ENCODE measurements at regions of chr17 and their contacts with region 1.

Region 1: DNA sequence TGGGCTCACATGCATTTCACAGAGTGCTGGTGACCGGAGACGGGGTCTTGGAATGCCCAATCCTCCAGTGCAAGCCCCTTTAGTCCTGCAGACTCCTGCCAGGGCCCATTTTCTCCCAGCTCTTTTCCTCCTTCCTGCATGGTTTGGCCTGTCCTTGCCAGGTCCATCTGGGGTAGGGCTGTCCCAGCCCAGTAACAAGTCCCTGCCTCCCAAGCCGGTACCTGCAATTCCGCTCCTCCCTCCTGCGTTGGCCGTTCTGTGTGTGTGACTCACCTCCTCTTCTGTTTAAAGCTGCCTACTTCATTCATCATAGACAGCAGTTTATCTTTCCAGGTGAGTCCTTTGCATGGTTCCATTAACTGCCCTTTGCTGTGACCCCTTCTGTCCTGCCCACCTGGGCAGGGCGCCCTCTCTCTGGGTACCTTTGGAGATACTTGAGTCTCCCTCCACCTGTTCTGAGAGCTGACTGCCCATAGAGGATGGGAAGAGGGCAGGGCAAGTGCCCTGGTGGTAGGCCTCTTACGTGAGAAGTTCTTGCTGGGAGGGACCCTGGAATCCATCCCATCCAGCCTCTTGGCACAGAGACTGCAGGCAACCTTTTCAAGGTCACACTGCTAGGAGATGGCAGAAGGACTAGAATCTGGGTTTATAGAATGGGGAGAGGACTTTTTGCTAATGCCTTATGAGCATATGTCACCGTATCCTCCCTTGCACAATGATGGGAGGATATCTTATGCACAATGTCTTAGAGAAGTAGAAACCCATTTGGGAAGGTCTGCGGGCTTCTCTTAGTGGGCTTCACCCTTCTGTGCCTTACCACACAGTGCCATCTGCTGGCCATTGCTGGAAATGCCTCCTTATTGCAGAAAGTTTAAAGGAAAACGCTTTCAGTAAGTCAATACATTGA is 29.7 kb upstream of the LGALS9 start:
- DNase-seq: peak; percentile 77 to 81
- ATAC-seq: peak; percentile 39 to 61; a peak in 4 of 6 replicates
- H3K4me3 ChIP-seq: no peak overlapping the region
- H3K27ac ChIP-seq: peak overlapping the region in 1 of 2 experiments; percentile 8; a peak in 1 of 6 replicates
- H3K4me1 ChIP-seq: peaks cover 25% of the 10 kb centered on the region
- CTCF ChIP-seq: peak; percentile 98
- EP300 ChIP-seq: no peak
- POLR2A ChIP-seq: no peak
- RAD21 ChIP-seq: peak; percentile 95 to 99

Region 2: GRCh38 chr17:27199948-27200347 is 401.4 kb before region 1 on chr17:
- CTCF ChIA-PET with region 1: interaction called, 38 read pairs
- POLR2A ChIA-PET with region 1: no interaction called
- DNase-seq: no peak
- ATAC-seq: no peak
- H3K4me3 ChIP-seq: no peak overlapping the region
- H3K27ac ChIP-seq: no peak overlapping the region
- H3K4me1 ChIP-seq: no peaks in the 10 kb centered on the region
- CTCF ChIP-seq: no peak
- EP300 ChIP-seq: no peak
- POLR2A ChIP-seq: no peak
- RAD21 ChIP-seq: no peak

Region 3: DNA sequence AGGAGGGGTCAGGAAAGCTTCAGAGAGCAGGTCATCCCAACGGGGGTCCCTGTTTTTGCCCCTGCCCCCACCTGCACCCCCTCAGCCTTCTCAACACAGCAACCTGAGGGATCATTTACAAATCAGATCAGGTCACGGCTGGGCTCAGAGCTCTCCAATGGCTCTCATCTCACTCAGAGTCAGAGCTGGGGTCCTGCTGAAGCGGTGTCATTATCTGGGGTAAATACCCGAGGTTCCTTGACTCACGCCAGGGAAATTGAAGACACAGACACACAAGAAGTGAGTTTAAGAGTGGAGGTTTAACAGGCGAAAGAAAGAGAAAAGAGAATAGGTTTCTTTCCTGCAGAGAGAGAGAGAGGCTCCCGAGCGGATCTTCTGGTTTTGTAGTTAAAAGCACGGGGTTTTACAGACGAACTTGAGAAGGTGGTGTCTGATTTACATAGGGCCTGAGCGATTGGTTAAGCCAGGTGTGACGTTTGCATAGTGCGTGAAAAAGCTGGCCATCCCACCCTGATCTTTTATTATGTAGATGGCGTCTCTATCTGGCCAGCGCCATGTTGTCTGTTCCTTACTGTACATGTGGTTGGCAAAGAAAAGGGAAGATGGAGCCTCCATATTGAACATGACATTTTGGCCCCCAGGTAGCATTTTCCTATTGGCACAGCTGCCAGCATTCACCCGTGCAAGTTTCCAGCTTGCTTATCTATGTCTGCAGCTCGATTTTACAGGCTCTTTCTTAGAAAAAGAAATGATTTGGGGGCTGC is 256.0 kb before region 1 on chr17:
- CTCF ChIA-PET with region 1: interaction called, 358 read pairs
- POLR2A ChIA-PET with region 1: no interaction called
- DNase-seq: no peak
- ATAC-seq: no peak
- H3K4me3 ChIP-seq: no peak overlapping the region
- H3K27ac ChIP-seq: no peak overlapping the region
- H3K4me1 ChIP-seq: peaks cover 20% of the 10 kb centered on the region
- CTCF ChIP-seq: no peak
- EP300 ChIP-seq: no peak
- POLR2A ChIP-seq: no peak
- RAD21 ChIP-seq: no peak

Region 4: GRCh38 chr17:27420226-27420950 is 180.9 kb before region 1 on chr17:
- CTCF ChIA-PET with region 1: interaction called, 18 read pairs
- POLR2A ChIA-PET with region 1: no interaction called
- DNase-seq: no peak
- ATAC-seq: no peak
- H3K4me3 ChIP-seq: no peak overlapping the region
- H3K27ac ChIP-seq: no peak overlapping the region
- H3K4me1 ChIP-seq: no peaks in the 10 kb centered on the region; the same call in 2 of the 3 replicates
- CTCF ChIP-seq: no peak
- EP300 ChIP-seq: no peak
- POLR2A ChIP-seq: no peak
- RAD21 ChIP-seq: no peak

Region 5: GRCh38 chr17:27473748-27474609 is 127.3 kb before region 1 on chr17:
- CTCF ChIA-PET with region 1: interaction called, 575 read pairs
- POLR2A ChIA-PET with region 1: no interaction called
- DNase-seq: no peak
- ATAC-seq: no peak
- H3K4me3 ChIP-seq: no peak overlapping the region
- H3K27ac ChIP-seq: peak overlapping the region in 1 of 2 experiments; percentile 66; a peak in 4 of 6 replicates
- H3K4me1 ChIP-seq: peaks cover 38% of the 10 kb centered on the region
- CTCF ChIP-seq: no peak
- EP300 ChIP-seq: no peak
- POLR2A ChIP-seq: no peak
- RAD21 ChIP-seq: no peak

Region 6: GRCh38 chr17:27544350-27545131 is 56.8 kb before region 1 on chr17:
- CTCF ChIA-PET with region 1: interaction called, 140 read pairs
- POLR2A ChIA-PET with region 1: no interaction called
- DNase-seq: no peak
- ATAC-seq: no peak
- H3K4me3 ChIP-seq: no peak overlapping the region
- H3K27ac ChIP-seq: peak overlapping the region; percentile 81 to 97
- H3K4me1 ChIP-seq: peaks cover 87% of the 10 kb centered on the region
- CTCF ChIP-seq: no peak
- EP300 ChIP-seq: no peak
- POLR2A ChIP-seq: no peak
- RAD21 ChIP-seq: no peak

Region 7: DNA sequence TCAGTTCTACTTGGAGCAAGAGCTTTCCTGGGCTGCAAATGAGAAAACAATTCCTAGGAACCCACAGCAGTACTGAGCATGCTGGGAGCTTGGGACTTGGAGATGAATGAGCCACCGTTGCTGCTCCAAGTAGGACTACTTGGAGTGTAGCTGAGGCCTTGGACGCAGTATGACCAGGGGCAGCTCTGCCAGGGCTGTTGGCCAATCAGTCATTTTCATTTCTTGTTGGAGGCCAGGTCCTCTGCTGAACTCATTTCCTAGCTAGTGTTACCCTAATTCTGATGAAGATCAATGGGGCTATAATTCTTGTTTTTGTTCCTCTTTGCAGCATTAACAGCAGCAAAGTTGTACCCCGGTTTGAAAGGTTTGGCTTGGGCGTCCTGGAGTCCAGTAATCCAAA is 21.7 kb after region 1 on chr17:
- CTCF ChIA-PET with region 1: interaction called, 160 read pairs
- POLR2A ChIA-PET with region 1: no interaction called
- DNase-seq: no peak
- ATAC-seq: no peak
- H3K4me3 ChIP-seq: no peak overlapping the region
- H3K27ac ChIP-seq: no peak overlapping the region
- H3K4me1 ChIP-seq: no peaks in the 10 kb centered on the region
- CTCF ChIP-seq: no peak
- EP300 ChIP-seq: no peak
- POLR2A ChIP-seq: no peak
- RAD21 ChIP-seq: no peak

Measured in A549 (cell line).